HCT116 (cell line): ENCODE measurements at regions of chr15 and their contacts with region 1.

Region 1: GRCh38 chr15:90233376-90234095 is at the start of gene CIB1:
- DNase-seq: peak; percentile 92
- ATAC-seq: peak; percentile 93
- H3K4me3 ChIP-seq: peak within 1 kb of the TSS; percentile 67 to 87
- H3K27ac ChIP-seq: peak within 1 kb of the TSS; percentile 69
- H3K4me1 ChIP-seq: peaks cover 9 to 49% of the 10 kb centered on the region in 2 experiments; a peak in 3 of 4 replicates
- H3K27me3 ChIP-seq: no peaks in the 10 kb centered on the region
- CTCF ChIP-seq: peak in 2 of 3 experiments; percentile 34 to 37; a peak in 2 of 6 replicates
- POLR2A ChIP-seq: no peak
- RAD21 ChIP-seq: no peak
- total RNA-seq, gene CIB1: 92.7 TPM

Region 2: GRCh38 chr15:90214553-90215196 is 18.9 kb before region 1 on chr15:
- CTCF ChIA-PET with region 1: interaction called, 15 read pairs
- POLR2A ChIA-PET with region 1: interaction called, 4 read pairs
- RAD21 ChIA-PET with region 1: no interaction called
- intact Hi-C with region 1: no loop called
- DNase-seq: no peak
- ATAC-seq: no peak
- H3K4me3 ChIP-seq: no peak overlapping the region
- H3K27ac ChIP-seq: peak overlapping the region; percentile 99
- H3K4me1 ChIP-seq: peaks cover 53 to 67% of the 10 kb centered on the region in 2 experiments
- H3K27me3 ChIP-seq: no peaks in the 10 kb centered on the region
- CTCF ChIP-seq: peak in 2 of 3 experiments; percentile 51 to 54; a peak in 4 of 6 replicates
- POLR2A ChIP-seq: no peak
- RAD21 ChIP-seq: no peak

Region 3: GRCh38 chr15:90221246-90221900 is 12.2 kb before region 1 on chr15:
- CTCF ChIA-PET with region 1: interaction called, 26 read pairs
- POLR2A ChIA-PET with region 1: interaction called, 8 read pairs
- RAD21 ChIA-PET with region 1: no interaction called
- intact Hi-C with region 1: no loop called
- DNase-seq: no peak
- ATAC-seq: peak; percentile 89
- H3K4me3 ChIP-seq: no peak overlapping the region
- H3K27ac ChIP-seq: no peak overlapping the region; the same call in 1 of the 2 replicates
- H3K4me1 ChIP-seq: peaks cover 0 to 16% of the 10 kb centered on the region in 2 experiments; a peak in 3 of 4 replicates
- H3K27me3 ChIP-seq: no peaks in the 10 kb centered on the region
- CTCF ChIP-seq: peak in 2 of 3 experiments; percentile 70 to 76; a peak in 4 of 6 replicates
- POLR2A ChIP-seq: no peak
- RAD21 ChIP-seq: no peak